T-cell (primary cell): ENCODE measurements at regions of chr12 and their contacts with region 1.

Region 1: DNA sequence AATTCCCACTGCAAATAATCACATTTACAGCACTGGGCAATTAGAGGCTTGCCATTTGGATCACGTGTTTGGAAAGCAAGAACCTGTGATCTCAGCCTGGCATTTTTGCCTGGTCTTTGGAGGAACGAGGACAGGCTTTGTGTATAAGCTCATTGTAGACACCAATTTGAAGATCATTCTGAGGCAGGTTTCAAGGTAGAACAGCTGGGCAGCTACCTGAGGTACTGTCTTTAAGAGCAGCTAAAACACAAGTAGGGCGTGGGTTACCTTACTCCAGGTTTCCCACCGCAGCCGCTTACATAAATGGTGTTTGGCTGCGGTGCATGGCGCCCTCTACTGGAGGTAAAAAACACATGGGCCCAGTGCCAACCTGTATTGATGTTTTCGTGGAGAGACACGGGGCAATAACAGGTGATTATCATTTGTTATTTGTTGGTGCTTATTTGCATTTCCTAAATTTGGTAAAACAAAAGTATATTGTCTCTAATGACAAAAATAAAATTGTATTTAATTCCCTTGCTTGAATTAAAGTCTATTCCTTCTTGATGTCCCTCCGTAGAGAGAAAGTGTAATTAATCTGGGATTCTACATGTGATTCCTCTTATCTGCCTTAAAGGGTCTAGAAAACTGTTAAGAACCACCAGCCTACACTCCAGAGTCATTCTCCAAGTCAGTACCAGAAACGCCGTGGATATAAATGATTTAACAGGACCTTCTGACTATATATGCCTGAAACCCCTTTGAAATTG is 69.7 kb downstream of the SVOP start:
- DNase-seq: peak; percentile 40 to 85 (median 65)
- ATAC-seq: peak; percentile 70 to 89 (median 73)
- H3K4me3 ChIP-seq: no peak overlapping the region
- H3K4me3 Mint-ChIP-seq: no peak overlapping the region
- H3K27ac ChIP-seq: no peak overlapping the region
- H3K27ac Mint-ChIP-seq: no peak overlapping the region
- H3K4me1 ChIP-seq: peaks cover 0 to 3% of the 10 kb centered on the region in 2 experiments
- H3K4me1 Mint-ChIP-seq: peaks cover 0 to 8% (median 7%) of the 10 kb centered on the region in 3 donors
- H3K27me3 ChIP-seq: no peaks in the 10 kb centered on the region
- H3K27me3 Mint-ChIP-seq: peaks cover 15% of the 10 kb centered on the region in 2 donors

Region 2: DNA sequence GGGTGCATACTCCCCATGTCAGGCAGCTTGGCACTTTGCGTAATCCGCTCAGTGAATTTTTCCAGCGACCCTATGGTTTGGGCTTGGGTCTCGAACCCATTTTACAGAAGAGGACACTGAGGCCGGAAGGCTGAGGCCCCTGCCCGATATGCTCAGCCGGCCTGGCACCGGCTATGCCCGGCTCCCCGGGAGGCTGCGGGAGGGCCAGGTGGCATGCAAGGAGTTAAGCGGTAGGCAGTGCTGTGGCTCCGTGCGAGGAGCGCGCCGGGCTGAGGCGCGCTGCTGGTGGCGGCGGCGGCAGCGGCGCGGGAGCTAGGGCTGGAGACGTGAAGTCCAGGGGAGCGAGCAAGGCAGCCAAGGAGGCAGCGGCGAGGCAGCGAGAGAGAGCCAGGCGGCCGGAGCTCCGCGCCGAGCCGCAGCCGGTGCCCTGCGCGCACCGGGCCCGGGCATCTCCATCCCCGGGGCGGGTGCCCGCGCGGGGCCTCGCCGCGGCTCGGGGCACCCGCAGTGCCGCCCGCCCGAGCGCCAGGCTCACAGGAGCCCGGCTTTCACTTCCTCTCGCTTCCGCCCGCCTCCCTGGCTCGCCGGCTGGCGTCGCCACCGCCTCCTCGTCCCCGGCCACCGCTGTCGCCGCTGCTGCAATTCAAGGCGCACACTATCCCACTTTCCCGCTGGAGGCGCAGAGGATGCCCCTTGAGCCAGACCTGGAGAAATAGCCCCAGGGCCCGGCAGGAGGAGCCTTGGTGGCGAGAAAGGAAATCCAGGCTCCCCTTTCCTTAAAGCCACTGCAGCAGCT is 822.0 kb before region 1 on chr12 and contains the start of gene WSCD2:
- CTCF ChIA-PET with region 1: no interaction called
- POLR2A ChIA-PET with region 1: no interaction called
- DNase-seq: peak in 2 of 35 experiments; percentile 1 to 2
- ATAC-seq: no peak
- H3K4me3 ChIP-seq: no peak within 1 kb of the TSS
- H3K4me3 Mint-ChIP-seq: peak within 1 kb of the TSS in 2 of 3 donors; percentile 25 to 43
- H3K27ac ChIP-seq: no peak within 1 kb of the TSS
- H3K27ac Mint-ChIP-seq: no peak within 1 kb of the TSS
- H3K4me1 ChIP-seq: peaks cover 0 to 2% of the 10 kb centered on the region in 2 experiments
- H3K4me1 Mint-ChIP-seq: peaks cover 0 to 5% (median 5%) of the 10 kb centered on the region in 3 donors
- H3K27me3 ChIP-seq: peaks cover 8 to 42% of the 10 kb centered on the region in 2 experiments
- H3K27me3 Mint-ChIP-seq: peaks cover 45 to 59% of the 10 kb centered on the region in 2 donors
- total RNA-seq, gene WSCD2: 0.06 to 1.2 (median 0.49) TPM in 4 of 5 donors, not detected in the other

Region 3: DNA sequence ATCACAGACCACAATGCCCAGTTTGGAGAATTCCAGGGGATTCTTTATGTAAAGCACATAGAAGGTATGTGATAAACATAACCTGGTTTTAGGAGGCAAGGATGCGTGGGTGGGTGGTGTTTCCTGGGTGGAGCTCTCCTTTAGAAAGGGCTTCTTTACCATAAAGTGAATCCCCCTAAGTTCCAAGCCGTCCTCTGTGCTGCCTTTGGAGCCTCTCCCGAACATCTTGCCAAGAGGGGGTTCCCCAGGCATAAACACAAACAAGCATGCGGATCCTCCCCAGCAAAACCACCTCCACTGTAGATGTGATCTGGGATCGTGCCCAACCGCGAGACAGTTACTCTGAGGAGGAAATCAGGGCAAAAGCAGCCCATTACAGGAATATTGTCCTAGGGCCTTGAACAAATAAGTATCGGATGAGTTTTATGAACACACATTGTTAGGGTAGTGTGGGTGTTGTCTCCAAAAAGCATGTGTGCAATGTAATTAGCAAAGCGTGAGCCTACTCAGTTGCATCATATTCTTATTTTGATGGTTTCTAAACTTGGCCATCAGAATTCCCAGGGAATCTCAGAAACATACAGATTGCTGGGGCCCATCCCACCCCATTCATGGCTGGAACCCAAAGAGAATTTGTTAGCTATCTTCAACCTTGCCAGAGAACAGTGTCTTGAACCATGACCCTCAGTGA is 171.0 kb before region 1 on chr12:
- CTCF ChIA-PET with region 1: no interaction called
- POLR2A ChIA-PET with region 1: interaction called in 1 of 2 experiments, 13 read pairs
- DNase-seq: no peak
- ATAC-seq: no peak
- H3K4me3 ChIP-seq: no peak overlapping the region
- H3K4me3 Mint-ChIP-seq: no peak overlapping the region
- H3K27ac ChIP-seq: no peak overlapping the region
- H3K27ac Mint-ChIP-seq: no peak overlapping the region
- H3K4me1 ChIP-seq: no peaks in the 10 kb centered on the region
- H3K4me1 Mint-ChIP-seq: peaks cover 0 to 3% (median 0%) of the 10 kb centered on the region in 3 donors
- H3K27me3 ChIP-seq: no peaks in the 10 kb centered on the region
- H3K27me3 Mint-ChIP-seq: no peaks in the 10 kb centered on the region

Region 4: DNA sequence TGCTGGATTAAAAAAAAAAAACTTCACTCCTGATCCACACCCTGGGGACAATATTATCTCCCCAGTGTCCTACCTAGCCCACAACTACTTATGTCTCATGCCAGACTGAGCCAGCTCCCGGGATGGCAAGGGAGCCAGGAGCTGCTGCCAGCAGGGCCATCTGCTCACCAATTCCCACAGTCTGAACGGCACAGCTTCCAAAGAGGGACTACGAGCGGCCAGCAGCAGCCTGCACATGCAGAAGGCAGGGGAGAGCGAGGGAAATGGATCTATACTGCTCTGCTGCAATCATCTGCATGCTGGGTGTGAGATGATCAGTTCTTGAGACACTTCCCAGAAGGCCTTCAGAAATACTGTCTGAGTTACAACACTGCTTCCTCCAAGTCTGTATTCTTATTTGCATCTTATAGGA is 104.9 kb before region 1 on chr12:
- CTCF ChIA-PET with region 1: interaction called in 1 of 2 experiments, 10 read pairs
- POLR2A ChIA-PET with region 1: no interaction called
- DNase-seq: no peak
- ATAC-seq: no peak
- H3K4me3 ChIP-seq: no peak overlapping the region
- H3K4me3 Mint-ChIP-seq: no peak overlapping the region
- H3K27ac ChIP-seq: no peak overlapping the region
- H3K27ac Mint-ChIP-seq: no peak overlapping the region
- H3K4me1 ChIP-seq: no peaks in the 10 kb centered on the region
- H3K4me1 Mint-ChIP-seq: peaks cover 0 to 5% (median 4%) of the 10 kb centered on the region in 3 donors
- H3K27me3 ChIP-seq: no peaks in the 10 kb centered on the region
- H3K27me3 Mint-ChIP-seq: no peaks in the 10 kb centered on the region

Region 5: GRCh38 chr12:108875682-108876361 is 75.3 kb before region 1 on chr12:
- CTCF ChIA-PET with region 1: no interaction called
- POLR2A ChIA-PET with region 1: no interaction called
- DNase-seq: no peak
- ATAC-seq: no peak
- H3K4me3 ChIP-seq: no peak overlapping the region
- H3K4me3 Mint-ChIP-seq: no peak overlapping the region
- H3K27ac ChIP-seq: no peak overlapping the region
- H3K27ac Mint-ChIP-seq: no peak overlapping the region
- H3K4me1 ChIP-seq: no peaks in the 10 kb centered on the region
- H3K4me1 Mint-ChIP-seq: peaks cover 0 to 2% (median 0%) of the 10 kb centered on the region in 3 donors
- H3K27me3 ChIP-seq: peaks cover 0 to 13% of the 10 kb centered on the region in 2 experiments
- H3K27me3 Mint-ChIP-seq: no peaks in the 10 kb centered on the region

Region 6: GRCh38 chr12:108930155-108930554 is 21.0 kb before region 1 on chr12:
- CTCF ChIA-PET with region 1: interaction called in 1 of 2 experiments, 20 read pairs
- POLR2A ChIA-PET with region 1: no interaction called
- DNase-seq: no peak
- ATAC-seq: no peak
- H3K4me3 ChIP-seq: no peak overlapping the region
- H3K4me3 Mint-ChIP-seq: no peak overlapping the region
- H3K27ac ChIP-seq: no peak overlapping the region
- H3K27ac Mint-ChIP-seq: no peak overlapping the region
- H3K4me1 ChIP-seq: no peaks in the 10 kb centered on the region
- H3K4me1 Mint-ChIP-seq: no peaks in the 10 kb centered on the region
- H3K27me3 ChIP-seq: peaks cover 0 to 6% of the 10 kb centered on the region in 2 experiments
- H3K27me3 Mint-ChIP-seq: peaks cover 4 to 8% of the 10 kb centered on the region in 2 donors

Region 7: GRCh38 chr12:110637869-110638441 is 1686.8 kb after region 1 on chr12:
- CTCF ChIA-PET with region 1: interaction called in 1 of 2 experiments, 12 read pairs
- POLR2A ChIA-PET with region 1: no interaction called
- DNase-seq: no peak
- ATAC-seq: peak in 2 of 4 experiments; percentile 23 to 46
- H3K4me3 ChIP-seq: no peak overlapping the region
- H3K4me3 Mint-ChIP-seq: no peak overlapping the region
- H3K27ac ChIP-seq: no peak overlapping the region
- H3K27ac Mint-ChIP-seq: no peak overlapping the region
- H3K4me1 ChIP-seq: peaks cover 4 to 9% of the 10 kb centered on the region in 2 experiments
- H3K4me1 Mint-ChIP-seq: peaks cover 20 to 32% (median 27%) of the 10 kb centered on the region in 3 donors
- H3K27me3 ChIP-seq: no peaks in the 10 kb centered on the region
- H3K27me3 Mint-ChIP-seq: no peaks in the 10 kb centered on the region